Right ventricle myocardium inferior (tissue), 1 donor: ENCODE measurements at regions of chr10 and their contacts with region 1.

Region 1: DNA sequence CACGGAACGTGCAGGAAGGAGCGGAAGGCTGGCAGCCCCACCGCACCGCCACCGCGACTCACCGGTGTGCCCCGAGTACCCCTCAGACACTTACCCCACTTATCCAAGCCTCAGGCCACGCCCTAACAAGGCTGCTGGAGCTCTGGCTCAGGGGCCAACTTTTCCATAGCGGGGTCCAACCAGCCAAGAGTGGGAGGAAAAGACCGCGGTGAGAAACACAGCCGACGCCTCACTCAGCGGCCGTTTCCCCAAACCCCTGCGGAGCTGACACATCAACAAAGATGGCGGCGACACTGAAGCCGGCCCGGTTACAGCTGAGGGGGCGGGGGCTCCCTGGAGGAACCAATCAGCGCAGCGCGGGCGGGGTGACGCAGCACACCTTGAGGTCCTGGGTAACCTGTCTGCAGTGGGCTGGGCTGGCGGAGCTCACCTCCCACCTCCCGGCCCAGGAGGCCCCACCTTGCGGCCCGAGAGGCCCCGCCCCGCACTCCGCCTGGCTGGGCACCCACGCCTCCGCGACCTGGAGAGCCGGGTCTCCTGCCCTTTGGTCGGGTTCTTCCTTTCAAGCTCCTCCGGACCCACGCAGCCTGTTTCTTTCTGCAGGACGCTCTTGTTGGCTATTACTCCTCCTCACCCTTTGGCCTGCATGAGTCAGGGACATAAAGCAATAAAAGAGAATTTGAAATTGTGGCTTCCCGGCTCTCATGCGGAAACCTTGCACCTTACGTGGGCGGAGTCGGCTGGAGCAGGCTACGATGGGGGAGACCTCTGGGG is at the start of gene CCDC186:
- DNase-seq: peak; percentile 98
- ATAC-seq: peak; percentile 98
- total RNA-seq, gene CCDC186: 17.4 TPM

Region 2: GRCh38 chr10:114266520-114266919 is 92.4 kb after region 1 on chr10:
- intact Hi-C with region 1: loop called (anchors 5 kb)
- DNase-seq: no peak
- ATAC-seq: peak; percentile 67

Region 3: GRCh38 chr10:114821293-114821914 is 647.3 kb after region 1 on chr10 and contains the start of gene FHIP2A:
- intact Hi-C with region 1: loop called (anchors 10 kb)
- DNase-seq: peak; percentile 93
- ATAC-seq: peak; percentile 94
- total RNA-seq, gene FHIP2A: 25.2 TPM